Adrenal gland (tissue), 19 donors: ENCODE measurements at regions of chr2 and their contacts with region 1.

Region 1: DNA sequence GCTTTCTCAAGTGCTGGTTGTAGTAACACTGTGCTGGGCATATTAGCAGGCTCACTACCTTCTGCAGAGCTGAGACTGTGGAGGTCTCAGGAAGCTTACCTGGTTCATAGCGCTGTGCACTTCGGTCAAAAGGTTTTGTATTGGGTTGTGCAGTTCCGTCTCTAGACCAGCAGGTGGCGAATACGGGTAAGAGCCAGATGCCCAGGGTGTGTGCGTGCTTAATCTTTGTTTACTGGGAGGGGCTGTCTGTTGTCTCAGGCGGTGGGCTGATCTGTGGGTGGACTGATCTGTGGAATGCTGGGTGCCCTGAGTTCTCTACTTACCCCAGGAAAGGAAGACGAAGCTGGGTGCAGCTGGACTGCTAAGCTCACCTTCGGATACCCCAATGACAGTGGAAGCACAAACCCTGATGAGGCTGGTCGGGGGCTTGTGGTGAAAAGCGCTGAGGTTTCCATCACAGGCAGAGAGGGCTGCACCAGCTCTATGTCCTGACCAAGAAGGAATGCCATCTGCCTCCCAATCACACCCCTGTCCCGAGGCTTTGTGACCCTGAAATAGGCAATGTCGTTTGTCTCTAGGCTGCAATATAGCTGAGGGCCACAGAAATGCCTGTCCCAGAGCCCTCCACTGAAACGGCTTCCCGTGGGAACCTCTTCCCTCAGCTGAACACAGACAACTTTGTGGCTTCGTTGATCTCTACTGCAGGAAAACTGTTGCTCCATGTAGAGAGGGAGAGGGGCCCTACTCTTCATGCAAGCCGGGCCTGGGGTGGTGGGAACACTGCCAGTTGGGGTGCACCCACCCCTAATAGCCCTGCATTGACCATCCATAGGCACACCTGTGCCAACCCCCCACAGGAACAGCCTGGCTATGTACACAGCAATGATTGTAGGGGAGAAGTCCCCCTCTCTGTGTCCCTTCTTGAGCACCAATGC is 45.9 kb upstream of the FAM117B start:
- DNase-seq: peak; percentile 67 to 90 (median 79)
- H3K4me3 ChIP-seq: peak overlapping the region in 1 of 4 donors; percentile 18
- H3K27ac ChIP-seq: no peak overlapping the region
- H3K4me1 ChIP-seq: peaks cover 4 to 6% of the 10 kb centered on the region in 2 donors
- H3K27me3 ChIP-seq: no peaks in the 10 kb centered on the region
- CTCF ChIP-seq: peak; percentile 90 to 94 (median 92)
- POLR2A ChIP-seq: no peak

Region 2: GRCh38 chr2:202450785-202451184 is 138.1 kb before region 1 on chr2:
- intact Hi-C with region 1: no loop called
- DNase-seq: peak in 2 of 7 donors; percentile 41 to 50
- H3K4me3 ChIP-seq: no peak overlapping the region
- H3K27ac ChIP-seq: peak overlapping the region; percentile 32 to 74 (median 64)
- H3K4me1 ChIP-seq: peaks cover 14 to 18% of the 10 kb centered on the region in 2 donors
- H3K27me3 ChIP-seq: no peaks in the 10 kb centered on the region
- CTCF ChIP-seq: no peak
- POLR2A ChIP-seq: no peak

Region 3: GRCh38 chr2:202870431-202871299 is 281.8 kb after region 1 on chr2:
- intact Hi-C with region 1: loop called in 1 of 2 experiments (anchors 10 kb)
- DNase-seq: peak; percentile 62 to 92 (median 67)
- H3K4me3 ChIP-seq: peak overlapping the region; percentile 26 to 97 (median 78)
- H3K27ac ChIP-seq: peak overlapping the region; percentile 7 to 88 (median 73)
- H3K4me1 ChIP-seq: peaks cover 0 to 12% of the 10 kb centered on the region in 2 donors
- H3K27me3 ChIP-seq: no peaks in the 10 kb centered on the region
- CTCF ChIP-seq: peak in 5 of 6 experiments; percentile 23 to 47 (median 45)
- POLR2A ChIP-seq: peak in 1 of 2 donors; percentile 30